ENCODE measurements at regions of chr18 and their contacts with region 1.

Region 1: GRCh38 chr18:3397071-3397745 is 52.8 kb upstream of the TGIF1 start:
- DNase-seq: peak in 5 of 10 donors; percentile 10 to 67 (median 54)
- H3K4me3 ChIP-seq: peak overlapping the region in 8 of 59 donors; percentile 2 to 46 (median 17)
- H3K27ac ChIP-seq: peak overlapping the region in 58 of 59 donors; percentile 68 to 99 (median 95)
- H3K27me3 ChIP-seq: peaks cover 0 to 3% (median 0%) of the 10 kb centered on the region in 45 donors
- CTCF ChIP-seq: peak in 14 of 56 donors; percentile 3 to 38 (median 17)

Region 2: GRCh38 chr18:3360211-3360610 is 37.0 kb before region 1 on chr18:
- intact Hi-C with region 1: loop called in 1 of 2 experiments (anchors 5 kb)
- DNase-seq: peak in 9 of 10 donors; percentile 31 to 77 (median 46)
- H3K4me3 ChIP-seq: peak overlapping the region in 1 of 59 donors; percentile 8
- H3K27ac ChIP-seq: peak overlapping the region in 56 of 59 donors; percentile 7 to 87 (median 71)
- H3K27me3 ChIP-seq: no peaks in the 10 kb centered on the region
- CTCF ChIP-seq: no peak

Region 3: DNA sequence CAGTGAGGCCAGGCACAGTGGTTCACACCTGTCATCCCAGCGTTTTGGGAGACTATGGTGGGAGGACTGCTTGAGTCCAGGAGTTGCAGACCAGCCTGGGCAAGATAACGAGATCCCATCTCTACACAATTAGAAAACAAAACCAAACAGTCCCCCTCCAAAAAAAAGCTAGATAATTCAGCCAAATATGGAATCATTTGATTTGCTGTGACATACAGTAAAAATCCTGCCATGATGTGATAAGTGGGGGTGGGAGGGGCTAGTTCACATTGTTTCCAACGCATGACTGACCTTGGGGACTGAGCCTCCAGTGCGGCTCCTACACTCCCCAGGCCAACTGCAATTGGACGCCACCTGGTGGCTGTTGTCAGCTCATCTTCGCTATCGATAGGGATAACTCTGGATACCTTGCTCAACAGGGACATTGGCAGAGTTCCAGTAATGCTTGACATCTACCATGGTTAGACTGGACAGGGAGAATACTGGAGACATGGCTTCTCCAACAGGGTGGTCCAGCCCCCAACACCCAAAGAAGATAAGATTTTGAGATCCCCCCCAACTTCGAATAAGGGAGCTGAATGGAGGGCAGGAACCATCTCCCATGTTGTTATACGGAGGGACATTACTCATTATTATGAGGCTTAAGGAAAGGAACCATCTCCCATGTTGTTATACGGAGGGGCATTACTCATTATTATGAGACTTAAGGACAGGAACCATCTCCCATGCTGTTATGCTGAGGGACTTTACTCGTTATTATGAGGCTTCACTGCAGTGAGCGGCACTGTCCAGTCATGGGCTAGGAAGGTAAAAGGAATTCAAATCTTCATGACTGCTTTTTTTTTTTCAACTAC is 188.7 kb after region 1 on chr18:
- intact Hi-C with region 1: loop called in 1 of 2 experiments (anchors 5 kb)
- DNase-seq: peak in 8 of 10 donors; percentile 17 to 73 (median 70)
- H3K4me3 ChIP-seq: no peak overlapping the region
- H3K27ac ChIP-seq: peak overlapping the region in 2 of 59 donors; percentile 29 to 38
- H3K27me3 ChIP-seq: no peaks in the 10 kb centered on the region
- CTCF ChIP-seq: peak; percentile 45 to 88 (median 74)

Measured in dorsolateral prefrontal cortex (tissue), 120 donors.